ENCODE measurements at regions of chr6 and their contacts with region 1.

Region 1: DNA sequence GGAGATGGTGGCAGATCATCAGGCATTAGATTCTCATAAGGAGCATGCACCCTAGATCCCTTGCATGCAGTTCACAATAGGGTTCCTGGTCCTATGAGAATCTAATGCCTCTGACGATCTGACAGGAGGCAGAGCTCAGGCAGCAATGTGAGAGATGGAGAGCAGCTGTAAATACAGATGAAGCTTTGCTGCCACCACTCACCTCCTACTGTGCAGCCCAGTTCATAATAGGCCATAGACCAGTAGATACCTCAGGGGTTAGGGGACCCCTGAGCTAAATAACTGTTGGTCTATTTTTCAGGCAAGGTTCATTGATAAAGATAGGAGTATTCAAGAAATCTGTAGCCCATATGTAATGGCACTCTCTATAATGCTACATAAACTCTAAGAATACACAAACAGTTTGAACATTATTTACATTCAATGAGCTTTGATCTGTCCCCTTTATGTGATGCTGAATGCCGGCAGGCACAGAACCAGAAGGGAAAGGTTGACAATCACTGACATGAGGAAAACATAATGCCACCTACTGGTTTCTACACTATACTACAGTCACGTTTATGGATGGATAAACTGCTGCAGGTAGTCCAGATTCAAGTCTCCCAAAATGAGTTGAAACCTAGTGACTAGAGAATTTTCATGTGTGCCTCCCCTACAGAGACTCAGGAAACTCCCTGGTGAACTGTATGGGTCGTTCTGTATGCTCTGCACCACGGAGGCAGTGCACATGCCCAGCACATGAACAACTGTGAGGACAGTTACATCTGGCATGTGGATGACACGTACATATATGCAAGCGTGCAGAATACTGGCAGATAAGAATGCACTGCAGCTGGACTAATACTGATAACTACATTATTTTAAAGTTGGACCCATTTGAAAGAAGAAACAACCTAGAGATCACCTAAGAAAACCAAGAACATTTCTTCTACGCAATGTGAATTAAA is 72.0 kb downstream of the DST start:
- DNase-seq: no peak
- ATAC-seq: peak; percentile 88
- H3K4me3 ChIP-seq: no peak overlapping the region
- H3K27ac ChIP-seq: no peak overlapping the region
- H3K4me1 ChIP-seq: no peaks in the 10 kb centered on the region
- H3K27me3 ChIP-seq: no peaks in the 10 kb centered on the region
- CTCF ChIP-seq: peak; percentile 50 to 51 (median 51)
- EP300 ChIP-seq: no peak
- POLR2A ChIP-seq: no peak
- RAD21 ChIP-seq: 0 out of 2 replicates have a peak, but pooled peaks have one; percentile 30

Region 2: DNA sequence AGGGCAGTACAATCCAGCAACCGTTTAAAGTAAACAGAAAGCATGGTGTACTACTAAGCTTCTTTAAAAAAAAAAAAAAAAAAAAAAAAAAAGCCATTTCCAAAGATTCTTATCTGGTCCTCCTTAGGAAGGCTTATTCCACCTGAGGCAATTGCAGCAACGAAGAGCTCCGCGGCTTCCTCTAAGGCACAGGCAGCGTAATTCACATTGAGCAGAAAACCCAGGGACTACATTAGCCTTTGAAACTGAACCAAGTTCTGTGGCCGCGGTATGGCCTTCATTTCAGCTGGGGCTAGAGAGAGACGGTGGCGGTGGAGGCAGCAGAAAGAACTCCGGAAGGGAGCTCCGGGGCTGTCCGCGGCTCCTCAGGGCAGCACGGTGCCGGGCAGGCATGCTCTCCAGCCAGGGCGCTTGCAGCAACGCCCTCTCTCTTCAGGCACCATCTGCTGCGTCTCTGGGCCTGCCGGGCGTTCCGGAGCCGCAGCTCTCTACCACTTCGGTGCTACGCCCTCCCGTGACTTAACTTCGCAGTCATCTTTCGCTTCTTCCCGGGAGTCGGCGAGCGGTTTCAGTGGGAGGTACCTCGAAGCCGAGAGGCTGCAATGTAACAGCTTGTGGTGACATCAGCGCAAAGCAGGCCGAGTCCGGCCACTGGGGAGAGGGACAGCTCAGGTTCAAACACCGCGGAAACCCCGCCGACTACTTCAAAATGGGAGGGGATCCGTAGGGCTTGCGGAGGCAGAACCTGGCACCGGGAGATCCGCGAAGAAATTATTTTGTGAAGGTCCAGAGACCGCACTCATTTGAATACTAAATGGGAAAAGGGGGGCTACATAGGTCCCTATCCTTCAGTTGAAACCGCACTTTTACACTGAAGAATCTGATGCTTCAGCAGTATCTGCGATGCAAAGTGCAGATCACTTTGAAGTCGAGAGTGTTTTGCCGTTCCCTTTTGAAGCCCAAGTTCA is 28.0 kb before region 1 on chr6:
- CTCF ChIA-PET with region 1: interaction called, 19 read pairs
- POLR2A ChIA-PET with region 1: no interaction called
- RAD21 ChIA-PET with region 1: interaction called, 17 read pairs
- SMC1A ChIA-PET with region 1: interaction called, 17 read pairs
- in situ Hi-C with region 1: no loop called
- intact Hi-C with region 1: no loop called
- DNase-seq: peak; percentile 91
- ATAC-seq: peak; percentile 93
- H3K4me3 ChIP-seq: peak overlapping the region; percentile 73
- H3K27ac ChIP-seq: peak overlapping the region; percentile 70
- H3K4me1 ChIP-seq: peaks cover 13% of the 10 kb centered on the region; the same call in 1 of the 2 replicates
- H3K27me3 ChIP-seq: no peaks in the 10 kb centered on the region
- CTCF ChIP-seq: peak in 2 of 3 experiments; percentile 6 to 11; a peak in 2 of 6 replicates
- EP300 ChIP-seq: 0 out of 4 replicates have a peak, but pooled peaks of 1 of the 2 experiments have one; percentile 7
- POLR2A ChIP-seq: peak; percentile 90
- RAD21 ChIP-seq: no peak

Region 3: GRCh38 chr6:56549014-56549413 is 21.7 kb before region 1 on chr6:
- CTCF ChIA-PET with region 1: interaction called, 15 read pairs
- POLR2A ChIA-PET with region 1: no interaction called
- RAD21 ChIA-PET with region 1: interaction called, 5 read pairs
- SMC1A ChIA-PET with region 1: interaction called, 11 read pairs
- in situ Hi-C with region 1: no loop called
- intact Hi-C with region 1: no loop called
- DNase-seq: no peak
- ATAC-seq: peak; percentile 46; the same call in 1 of the 3 replicates
- H3K4me3 ChIP-seq: no peak overlapping the region
- H3K27ac ChIP-seq: no peak overlapping the region
- H3K4me1 ChIP-seq: peaks cover 9% of the 10 kb centered on the region; the same call in 1 of the 2 replicates
- H3K27me3 ChIP-seq: no peaks in the 10 kb centered on the region
- CTCF ChIP-seq: peak; percentile 3 to 26 (median 24); a peak in 2 of 6 replicates
- EP300 ChIP-seq: no peak
- POLR2A ChIP-seq: no peak
- RAD21 ChIP-seq: peak; percentile 47

Region 4: DNA sequence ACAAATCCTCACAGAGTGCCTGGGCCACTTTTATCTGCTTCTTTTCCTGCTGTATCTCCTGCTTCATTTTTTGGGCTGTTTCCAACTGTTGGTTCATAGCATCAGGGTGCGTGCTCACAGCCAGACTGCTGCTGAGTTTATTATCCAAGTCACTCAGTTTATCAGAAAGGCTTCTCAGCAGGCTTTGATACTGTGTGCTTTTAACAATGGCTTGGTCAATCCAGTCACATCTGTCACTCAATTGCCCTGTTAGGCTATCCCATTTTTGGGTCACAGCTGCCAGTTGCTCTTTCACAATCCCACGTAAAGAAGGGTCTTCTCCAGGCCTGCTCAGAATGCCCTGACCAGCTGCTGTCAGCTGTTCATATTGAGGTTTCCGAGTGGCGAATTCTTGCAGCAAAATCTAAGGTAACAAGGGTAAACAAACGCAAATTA is 15.2 kb before region 1 on chr6:
- CTCF ChIA-PET with region 1: interaction called, 15 read pairs
- POLR2A ChIA-PET with region 1: no interaction called
- RAD21 ChIA-PET with region 1: interaction called, 3 read pairs
- SMC1A ChIA-PET with region 1: interaction called, 12 read pairs
- in situ Hi-C with region 1: no loop called
- intact Hi-C with region 1: no loop called
- DNase-seq: no peak
- ATAC-seq: no peak
- H3K4me3 ChIP-seq: no peak overlapping the region
- H3K27ac ChIP-seq: no peak overlapping the region
- H3K4me1 ChIP-seq: 0 out of 2 replicates have a peak, but pooled peaks cover under 1% of the 10 kb centered on the region
- H3K27me3 ChIP-seq: no peaks in the 10 kb centered on the region
- CTCF ChIP-seq: no peak
- EP300 ChIP-seq: no peak
- POLR2A ChIP-seq: no peak
- RAD21 ChIP-seq: no peak

Region 5: GRCh38 chr6:56581296-56581925 is 10.7 kb after region 1 on chr6:
- CTCF ChIA-PET with region 1: interaction called, 16 read pairs
- POLR2A ChIA-PET with region 1: interaction called, 3 read pairs
- RAD21 ChIA-PET with region 1: no interaction called
- SMC1A ChIA-PET with region 1: interaction called, 3 read pairs
- in situ Hi-C with region 1: no loop called
- intact Hi-C with region 1: no loop called
- DNase-seq: no peak
- ATAC-seq: no peak
- H3K4me3 ChIP-seq: no peak overlapping the region
- H3K27ac ChIP-seq: no peak overlapping the region
- H3K4me1 ChIP-seq: no peaks in the 10 kb centered on the region
- H3K27me3 ChIP-seq: no peaks in the 10 kb centered on the region
- CTCF ChIP-seq: no peak
- EP300 ChIP-seq: no peak
- POLR2A ChIP-seq: no peak
- RAD21 ChIP-seq: no peak

Region 6: GRCh38 chr6:57068066-57068465 is 497.4 kb after region 1 on chr6:
- CTCF ChIA-PET with region 1: no interaction called
- POLR2A ChIA-PET with region 1: no interaction called
- RAD21 ChIA-PET with region 1: no interaction called
- SMC1A ChIA-PET with region 1: no interaction called
- in situ Hi-C with region 1: no loop called
- intact Hi-C with region 1: no loop called
- DNase-seq: no peak
- ATAC-seq: no peak
- H3K4me3 ChIP-seq: no peak overlapping the region
- H3K27ac ChIP-seq: no peak overlapping the region
- H3K4me1 ChIP-seq: no peaks in the 10 kb centered on the region
- H3K27me3 ChIP-seq: no peaks in the 10 kb centered on the region
- CTCF ChIP-seq: no peak
- EP300 ChIP-seq: no peak
- POLR2A ChIP-seq: no peak
- RAD21 ChIP-seq: no peak

Measured in GM12878 (cell line).